Motor neuron (in vitro differentiated cells): ENCODE measurements at regions of chr4 and their contacts with region 1.

Region 1: GRCh38 chr4:186587416-186588018 is 32.1 kb upstream of the MTNR1A start:
- ATAC-seq: peak in 4 of 8 experiments; percentile 49 to 78 (median 65)
- H3K4me3 ChIP-seq: no peak overlapping the region
- H3K27ac ChIP-seq: no peak overlapping the region
- H3K4me1 ChIP-seq: no peaks in the 10 kb centered on the region

Region 2: DNA sequence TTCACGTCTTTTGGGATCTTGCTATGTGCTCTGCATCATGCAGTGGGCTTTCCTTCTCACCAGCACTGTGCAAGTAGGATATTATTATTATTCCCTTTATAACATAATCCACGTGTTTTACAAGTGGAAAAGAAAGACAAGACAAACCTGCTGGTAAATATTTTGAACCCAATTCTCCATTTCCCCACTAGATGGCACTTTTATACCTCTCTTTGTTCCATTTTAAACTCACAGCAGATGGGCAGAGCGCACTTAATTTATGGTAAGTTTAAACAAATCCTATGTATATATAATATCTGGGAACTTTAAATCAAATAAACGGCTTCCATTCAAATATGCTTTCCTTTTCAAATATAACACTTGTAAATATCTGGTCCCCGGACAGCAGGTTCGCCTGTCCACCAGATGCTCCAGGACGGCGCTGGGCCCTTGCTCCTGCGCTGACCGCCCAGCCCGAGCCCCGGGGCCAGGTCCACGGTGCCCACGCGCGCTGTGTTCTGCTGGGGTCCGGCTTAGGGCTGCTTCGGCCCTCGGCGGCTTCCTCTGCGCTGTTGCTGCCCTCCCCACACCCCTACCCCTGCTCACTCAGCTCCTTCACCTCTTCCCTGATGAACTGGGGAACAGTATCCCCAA is 290.4 kb before region 1 on chr4:
- in situ Hi-C with region 1: loop called in 6 of 9 experiments (anchors 10 to 25 kb)
- ATAC-seq: peak in 4 of 8 experiments; percentile 35 to 83 (median 52)
- H3K4me3 ChIP-seq: no peak overlapping the region
- H3K27ac ChIP-seq: no peak overlapping the region
- H3K4me1 ChIP-seq: no peaks in the 10 kb centered on the region

Region 3: DNA sequence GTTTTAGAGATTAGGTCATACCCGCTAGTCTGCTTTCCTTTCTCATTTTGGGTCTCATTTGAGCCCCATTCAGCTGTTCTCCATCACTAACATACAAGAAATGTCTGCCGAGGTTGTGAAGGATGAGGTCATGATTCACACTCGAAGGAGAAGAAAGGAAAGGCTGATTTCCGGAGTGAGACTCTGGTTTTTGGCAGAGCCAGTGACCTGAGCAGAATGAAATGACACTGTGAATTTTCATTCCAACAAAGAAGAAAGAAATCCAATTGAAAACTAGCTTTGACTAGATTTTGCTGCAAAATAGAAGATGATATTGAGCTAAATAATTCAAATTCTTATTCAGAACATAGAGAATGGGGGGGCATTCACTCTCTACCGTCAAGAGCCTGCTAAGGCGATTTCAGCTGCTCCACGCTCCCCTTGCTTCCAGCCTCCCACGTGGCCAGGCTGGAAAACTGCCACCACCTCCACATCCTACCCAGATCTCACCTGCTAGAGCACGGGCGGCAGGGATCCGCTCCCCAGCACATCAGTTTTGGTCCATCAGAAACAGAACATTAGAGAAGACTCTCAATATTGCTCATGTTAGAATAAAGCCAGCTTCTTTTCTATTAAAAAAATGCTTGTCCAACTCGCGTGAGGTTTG is 282.5 kb before region 1 on chr4:
- in situ Hi-C with region 1: loop called in 1 of 9 experiments (anchors 25 kb)
- ATAC-seq: peak in 1 of 8 experiments; percentile 55
- H3K4me3 ChIP-seq: no peak overlapping the region
- H3K27ac ChIP-seq: no peak overlapping the region
- H3K4me1 ChIP-seq: peaks cover 0 to 3% of the 10 kb centered on the region in 2 donors